CD4-positive, alpha-beta T cell (primary cell): ENCODE measurements at regions of chr16 and their contacts with region 1.

Region 1: DNA sequence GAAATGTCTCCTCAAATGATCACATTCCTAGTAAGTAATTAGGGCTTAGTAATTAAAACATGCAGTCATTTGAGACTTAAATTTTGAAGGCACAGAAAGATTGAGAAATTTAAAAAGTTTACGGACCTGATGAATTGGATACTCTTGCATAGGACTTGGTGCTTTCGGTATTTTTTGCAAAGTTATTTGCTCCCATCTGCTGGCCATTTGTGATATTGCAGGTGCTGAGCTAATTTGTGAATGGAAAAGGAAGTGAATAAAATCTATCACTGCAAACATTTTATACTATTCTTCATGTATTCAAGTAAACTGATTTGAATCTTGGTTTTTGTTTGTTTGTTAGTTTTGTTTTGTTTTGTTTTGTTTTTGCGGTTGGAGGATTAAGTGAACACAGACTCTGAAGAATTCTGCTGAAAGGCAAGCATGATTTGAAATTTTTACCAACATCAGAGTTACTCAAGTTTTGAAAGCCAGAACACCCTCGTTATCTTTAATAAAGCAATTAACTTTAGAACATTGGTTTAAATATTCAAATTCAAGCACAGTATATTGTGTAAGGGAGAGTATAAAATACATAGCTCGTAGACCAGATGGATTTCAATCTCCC is 689.5 kb upstream of the RBFOX1 start:
- DNase-seq: peak in 11 of 14 experiments; percentile 1 to 45 (median 19)
- ATAC-seq: no peak
- H3K4me3 ChIP-seq: no peak overlapping the region
- H3K4me3 Mint-ChIP-seq: no peak overlapping the region
- H3K27ac ChIP-seq: no peak overlapping the region
- H3K27ac Mint-ChIP-seq: no peak overlapping the region
- H3K4me1 ChIP-seq: no peaks in the 10 kb centered on the region
- H3K4me1 Mint-ChIP-seq: peaks cover 4% of the 10 kb centered on the region
- H3K27me3 ChIP-seq: peaks cover 0 to 3% of the 10 kb centered on the region in 2 experiments
- H3K27me3 Mint-ChIP-seq: peaks cover 7% of the 10 kb centered on the region
- CTCF ChIP-seq: peak; percentile 83

Region 2: DNA sequence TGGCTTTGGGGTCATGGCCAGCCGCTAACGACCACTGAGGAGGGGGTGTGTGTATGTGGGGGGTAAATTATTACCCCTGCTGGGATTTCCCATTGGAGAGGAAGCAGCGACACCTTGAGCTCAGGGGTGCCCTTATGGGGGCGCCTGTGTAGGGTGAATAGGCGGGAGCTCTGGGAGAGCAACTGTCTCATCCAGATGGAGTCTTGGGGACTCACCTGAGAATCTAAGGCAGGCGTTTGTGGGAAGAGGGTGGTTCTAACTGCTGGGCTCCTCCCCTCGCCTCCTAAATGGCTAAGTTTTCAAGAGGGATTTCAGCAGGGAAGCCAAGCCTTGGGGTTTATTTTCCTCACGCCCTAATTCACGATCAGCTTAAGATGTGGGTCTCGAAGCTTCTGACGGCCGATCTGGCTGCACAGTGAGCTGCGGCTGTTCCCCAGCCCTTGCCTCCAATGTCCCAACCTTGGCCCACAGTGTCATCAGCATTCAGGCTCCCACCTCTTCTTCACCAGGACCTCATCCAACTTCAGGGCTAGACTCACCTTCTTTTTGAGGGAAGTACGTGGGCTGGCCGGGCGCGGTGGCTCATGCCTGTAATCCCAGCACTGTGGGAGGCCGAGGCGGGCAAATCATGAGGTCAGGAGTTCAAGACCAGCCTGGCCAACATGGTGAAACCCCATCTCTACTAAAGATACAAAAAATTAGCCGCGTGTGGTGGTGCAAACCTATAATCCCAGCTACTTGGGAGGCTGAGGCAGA is 1408.7 kb before region 1 on chr16:
- CTCF ChIA-PET with region 1: no interaction called
- POLR2A ChIA-PET with region 1: no interaction called
- intact Hi-C with region 1: loop called in 1 of 2 experiments (anchors 5 kb)
- DNase-seq: no peak
- ATAC-seq: no peak
- H3K4me3 ChIP-seq: no peak overlapping the region
- H3K4me3 Mint-ChIP-seq: no peak overlapping the region
- H3K27ac ChIP-seq: no peak overlapping the region
- H3K27ac Mint-ChIP-seq: no peak overlapping the region
- H3K4me1 ChIP-seq: peaks cover 2% of the 10 kb centered on the region
- H3K4me1 Mint-ChIP-seq: peaks cover 4% of the 10 kb centered on the region
- H3K27me3 ChIP-seq: peaks cover 11 to 13% of the 10 kb centered on the region in 2 experiments
- H3K27me3 Mint-ChIP-seq: peaks cover 66% of the 10 kb centered on the region
- CTCF ChIP-seq: no peak

Region 3: GRCh38 chr16:6593799-6594198 is 49.4 kb before region 1 on chr16:
- CTCF ChIA-PET with region 1: no interaction called
- POLR2A ChIA-PET with region 1: no interaction called
- intact Hi-C with region 1: loop called in 1 of 2 experiments (anchors 5 kb)
- DNase-seq: no peak
- ATAC-seq: no peak
- H3K4me3 ChIP-seq: no peak overlapping the region
- H3K4me3 Mint-ChIP-seq: no peak overlapping the region
- H3K27ac ChIP-seq: no peak overlapping the region
- H3K27ac Mint-ChIP-seq: no peak overlapping the region
- H3K4me1 ChIP-seq: no peaks in the 10 kb centered on the region
- H3K4me1 Mint-ChIP-seq: no peaks in the 10 kb centered on the region
- H3K27me3 ChIP-seq: no peaks in the 10 kb centered on the region
- H3K27me3 Mint-ChIP-seq: no peaks in the 10 kb centered on the region
- CTCF ChIP-seq: no peak